Activated naive CD4-positive, alpha-beta T cell treated with anti-CD3 and anti-CD28 coated beads for 36 hours (primary cell): ENCODE measurements at regions of chr12 and their contacts with region 1.

Region 1: GRCh38 chr12:49776413-49776812 is 35.1 kb downstream of the TMBIM6 start:
- DNase-seq: peak; percentile 80
- H3K4me3 Mint-ChIP-seq: no peak overlapping the region
- H3K27ac Mint-ChIP-seq: no peak overlapping the region
- H3K4me1 Mint-ChIP-seq: peaks cover 6% of the 10 kb centered on the region
- H3K27me3 Mint-ChIP-seq: peaks cover 3% of the 10 kb centered on the region

Region 2: DNA sequence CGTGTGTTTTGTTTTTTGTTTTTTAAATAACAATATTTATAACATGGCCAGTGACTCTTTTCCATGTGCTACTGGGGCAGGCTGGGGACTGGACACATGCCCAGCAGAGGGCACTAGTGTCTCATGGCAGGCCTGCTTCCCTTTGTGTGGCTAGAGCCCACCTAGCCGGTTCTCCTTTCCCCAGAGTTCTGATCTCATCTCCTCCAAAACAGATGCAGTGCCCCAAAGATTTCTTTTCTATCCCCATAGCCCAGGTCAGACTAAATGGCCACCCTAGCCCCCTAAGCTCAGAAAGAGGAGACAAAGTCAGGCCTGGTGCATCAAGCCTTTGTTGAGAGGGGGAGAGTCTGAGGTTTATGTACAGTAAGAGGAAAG is 131.8 kb before region 1 on chr12:
- CTCF ChIA-PET with region 1: interaction called, 32 read pairs
- intact Hi-C with region 1: loop called (anchors 2 kb)
- DNase-seq: peak; percentile 90
- H3K4me3 Mint-ChIP-seq: no peak overlapping the region
- H3K27ac Mint-ChIP-seq: peak overlapping the region; percentile 71
- H3K4me1 Mint-ChIP-seq: peaks cover 29% of the 10 kb centered on the region
- H3K27me3 Mint-ChIP-seq: no peaks in the 10 kb centered on the region

Region 3: GRCh38 chr12:49740930-49741881 is 35.2 kb before region 1 on chr12 and contains the start of gene TMBIM6:
- CTCF ChIA-PET with region 1: interaction called, 41 read pairs
- intact Hi-C with region 1: loop called (anchors 1 kb)
- DNase-seq: peak; percentile 99
- H3K4me3 Mint-ChIP-seq: peak within 1 kb of the TSS; percentile 100
- H3K27ac Mint-ChIP-seq: peak within 1 kb of the TSS; percentile 100
- H3K4me1 Mint-ChIP-seq: peaks cover 34% of the 10 kb centered on the region
- H3K27me3 Mint-ChIP-seq: no peaks in the 10 kb centered on the region
- total RNA-seq, gene TMBIM6: 466 to 498 TPM

Region 4: GRCh38 chr12:49796606-49797448 is 20.4 kb after region 1 on chr12:
- CTCF ChIA-PET with region 1: interaction called, 14 read pairs
- intact Hi-C with region 1: no loop called
- DNase-seq: no peak
- H3K4me3 Mint-ChIP-seq: no peak overlapping the region
- H3K27ac Mint-ChIP-seq: no peak overlapping the region
- H3K4me1 Mint-ChIP-seq: no peaks in the 10 kb centered on the region
- H3K27me3 Mint-ChIP-seq: no peaks in the 10 kb centered on the region

Region 5: GRCh38 chr12:49842519-49843352 is 66.3 kb after region 1 on chr12 and contains the start of gene BCDIN3D:
- CTCF ChIA-PET with region 1: interaction called, 46 read pairs
- intact Hi-C with region 1: loop called (anchors 1 kb)
- DNase-seq: peak; percentile 97
- H3K4me3 Mint-ChIP-seq: peak within 1 kb of the TSS; percentile 91
- H3K27ac Mint-ChIP-seq: peak within 1 kb of the TSS; percentile 93
- H3K4me1 Mint-ChIP-seq: peaks cover 34% of the 10 kb centered on the region
- H3K27me3 Mint-ChIP-seq: no peaks in the 10 kb centered on the region
- total RNA-seq, gene BCDIN3D: 2.4 to 4.1 TPM

Region 6: GRCh38 chr12:50074936-50075807 is 298.8 kb after region 1 on chr12:
- CTCF ChIA-PET with region 1: no interaction called
- intact Hi-C with region 1: loop called (anchors 1 kb)
- DNase-seq: peak; percentile 88
- H3K4me3 Mint-ChIP-seq: no peak overlapping the region
- H3K27ac Mint-ChIP-seq: no peak overlapping the region
- H3K4me1 Mint-ChIP-seq: peaks cover 5% of the 10 kb centered on the region
- H3K27me3 Mint-ChIP-seq: no peaks in the 10 kb centered on the region

Region 7: GRCh38 chr12:51198568-51199365 is 1422.4 kb after region 1 on chr12:
- CTCF ChIA-PET with region 1: no interaction called
- intact Hi-C with region 1: no loop called
- DNase-seq: no peak
- H3K4me3 Mint-ChIP-seq: no peak overlapping the region
- H3K27ac Mint-ChIP-seq: no peak overlapping the region
- H3K4me1 Mint-ChIP-seq: peaks cover 13% of the 10 kb centered on the region
- H3K27me3 Mint-ChIP-seq: no peaks in the 10 kb centered on the region